ENCODE measurements at regions of chr5 and their contacts with region 1.

Region 1: DNA sequence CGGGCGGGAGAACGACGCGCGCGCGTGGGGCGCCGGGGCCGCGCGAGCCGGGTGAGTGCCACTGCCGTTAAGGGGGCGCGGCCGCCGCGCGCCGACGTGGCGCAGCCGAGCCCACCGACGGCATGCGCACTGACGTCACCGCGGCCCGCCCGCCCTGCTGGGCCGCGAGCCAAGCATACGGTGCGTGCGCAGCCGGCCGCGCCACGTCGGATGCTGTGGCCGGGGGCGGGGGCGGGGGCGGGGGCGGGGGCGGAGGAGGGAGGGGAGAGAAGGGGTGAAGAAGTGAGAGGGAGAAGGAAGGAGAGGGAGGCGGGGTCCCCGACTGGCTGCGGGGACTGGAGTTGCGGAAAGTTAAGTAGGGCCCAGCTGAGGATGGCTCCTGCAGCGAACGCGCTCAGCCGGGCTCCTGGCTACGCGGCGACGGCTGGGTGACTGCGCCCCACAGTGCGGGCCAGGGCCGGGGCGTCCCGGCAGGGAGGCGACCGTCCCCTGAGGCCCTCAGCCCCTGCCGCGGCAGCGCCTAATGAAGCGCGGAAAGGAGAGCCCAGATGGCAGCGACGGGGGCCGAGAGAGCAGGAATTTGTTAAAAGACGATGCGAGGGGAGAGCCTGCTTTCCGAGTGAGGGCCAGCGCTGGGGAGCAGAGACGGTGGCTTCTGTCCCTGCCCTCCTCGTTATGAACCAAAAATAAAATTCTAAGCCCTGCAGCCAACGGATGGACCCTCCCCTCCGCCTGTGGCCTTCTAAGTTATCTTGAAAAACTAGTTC is at the start of gene DAP:
- DNase-seq: peak; percentile 92
- ATAC-seq: peak; percentile 82
- H3K4me3 Mint-ChIP-seq: peak within 1 kb of the TSS; percentile 91
- H3K27ac Mint-ChIP-seq: peak within 1 kb of the TSS; percentile 92
- H3K4me1 Mint-ChIP-seq: peaks cover 57% of the 10 kb centered on the region
- H3K27me3 Mint-ChIP-seq: no peaks in the 10 kb centered on the region
- CTCF ChIP-seq: no peak
- total RNA-seq, gene DAP: 50.5 and 51.3 TPM in 2 replicates

Region 2: GRCh38 chr5:10249948-10250803 is 511.2 kb before region 1 on chr5 and contains the start of gene CCT5:
- CTCF ChIA-PET with region 1: no interaction called
- POLR2A ChIA-PET with region 1: no interaction called
- intact Hi-C with region 1: loop called (anchors 2 kb)
- DNase-seq: peak; percentile 80
- ATAC-seq: peak; percentile 80
- H3K4me3 Mint-ChIP-seq: peak within 1 kb of the TSS; percentile 98
- H3K27ac Mint-ChIP-seq: peak within 1 kb of the TSS; percentile 99
- H3K4me1 Mint-ChIP-seq: peaks cover 52% of the 10 kb centered on the region
- H3K27me3 Mint-ChIP-seq: no peaks in the 10 kb centered on the region
- CTCF ChIP-seq: no peak
- total RNA-seq, gene CCT5: 203 and 213 TPM in 2 replicates

Region 3: DNA sequence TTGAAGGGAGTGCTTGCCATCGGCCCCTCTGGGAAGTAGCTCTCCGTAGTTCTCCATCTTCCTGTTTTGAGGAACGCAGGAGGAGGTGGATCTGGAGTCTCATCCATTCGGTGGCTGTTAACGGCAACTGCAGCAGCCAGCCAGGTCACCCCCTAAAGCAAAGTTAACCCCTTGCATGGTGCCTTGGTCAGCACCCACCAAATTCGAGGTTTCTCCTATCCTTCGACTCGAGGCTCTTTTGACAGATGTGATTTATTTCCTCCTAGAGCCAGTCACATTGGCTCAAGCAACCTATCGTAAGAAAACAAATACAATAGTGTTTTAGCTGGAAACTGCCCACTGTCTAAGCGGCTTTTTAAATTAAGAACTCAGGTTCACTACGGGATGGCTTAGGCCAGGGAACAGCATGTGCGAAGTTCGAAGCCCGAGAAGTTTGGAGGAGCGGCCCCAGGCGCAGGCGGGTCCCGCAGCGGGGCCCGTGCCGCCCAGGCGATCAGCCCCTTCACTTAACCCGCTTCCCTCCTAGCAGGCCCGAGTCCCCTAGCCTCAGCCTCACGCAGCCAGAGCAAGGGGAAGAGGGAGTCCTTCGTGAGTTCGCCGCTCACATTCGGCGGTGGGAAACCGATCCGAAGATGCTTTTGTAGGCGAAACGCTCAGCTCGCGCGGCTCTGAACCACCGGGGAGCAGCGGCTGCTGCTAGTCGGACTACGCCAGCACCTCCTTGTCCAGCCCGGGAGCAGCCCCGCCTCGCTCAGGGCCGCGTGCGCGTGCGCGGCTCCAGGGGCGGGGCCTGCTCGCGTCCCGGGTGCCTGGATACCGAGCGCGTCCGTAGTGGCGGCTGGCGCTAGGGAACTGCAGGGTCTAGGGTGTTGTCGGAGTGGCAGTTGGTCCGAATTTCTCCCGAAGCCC is 320.0 kb before region 1 on chr5 and contains the start of gene ROPN1L:
- CTCF ChIA-PET with region 1: no interaction called
- POLR2A ChIA-PET with region 1: no interaction called
- intact Hi-C with region 1: loop called (anchors 1 kb)
- DNase-seq: peak; percentile 84
- ATAC-seq: peak; percentile 96
- H3K4me3 Mint-ChIP-seq: peak within 1 kb of the TSS; percentile 88
- H3K27ac Mint-ChIP-seq: peak within 1 kb of the TSS; percentile 9
- H3K4me1 Mint-ChIP-seq: peaks cover 37% of the 10 kb centered on the region
- H3K27me3 Mint-ChIP-seq: peaks cover 3% of the 10 kb centered on the region
- CTCF ChIP-seq: no peak
- total RNA-seq, gene ROPN1L: 0.49 TPM in 1 of 2 replicates, not detected in the other

Region 4: GRCh38 chr5:10701567-10702039 is 59.7 kb before region 1 on chr5:
- CTCF ChIA-PET with region 1: no interaction called
- POLR2A ChIA-PET with region 1: interaction called, 4 read pairs
- intact Hi-C with region 1: loop called (anchors 1 kb)
- DNase-seq: no peak
- ATAC-seq: peak; percentile 26
- H3K4me3 Mint-ChIP-seq: no peak overlapping the region
- H3K27ac Mint-ChIP-seq: no peak overlapping the region
- H3K4me1 Mint-ChIP-seq: peaks cover 58% of the 10 kb centered on the region
- H3K27me3 Mint-ChIP-seq: no peaks in the 10 kb centered on the region
- CTCF ChIP-seq: no peak

Region 5: GRCh38 chr5:10735569-10736276 is 25.6 kb before region 1 on chr5:
- CTCF ChIA-PET with region 1: no interaction called
- POLR2A ChIA-PET with region 1: interaction called, 6 read pairs
- intact Hi-C with region 1: loop called (anchors 1 kb)
- DNase-seq: peak; percentile 32
- ATAC-seq: peak; percentile 92
- H3K4me3 Mint-ChIP-seq: no peak overlapping the region
- H3K27ac Mint-ChIP-seq: peak overlapping the region; percentile 54
- H3K4me1 Mint-ChIP-seq: peaks cover 46% of the 10 kb centered on the region
- H3K27me3 Mint-ChIP-seq: no peaks in the 10 kb centered on the region
- CTCF ChIP-seq: no peak